ENCODE measurements at regions of chr4 and their contacts with region 1.

Region 1: GRCh38 chr4:69126024-69126423 is 29.8 kb downstream of the UGT2B7 start:
- DNase-seq: peak in 1 of 2 donors; percentile 15
- H3K4me3 ChIP-seq: no peak overlapping the region
- H3K27ac ChIP-seq: no peak overlapping the region
- H3K4me1 ChIP-seq: no peaks in the 10 kb centered on the region
- H3K27me3 ChIP-seq: no peaks in the 10 kb centered on the region
- CTCF ChIP-seq: no peak
- EP300 ChIP-seq: no peak
- POLR2A ChIP-seq: no peak

Region 2: GRCh38 chr4:68883870-68884269 is 242.2 kb before region 1 on chr4:
- intact Hi-C with region 1: loop called (anchors 5 kb)
- DNase-seq: no peak
- H3K4me3 ChIP-seq: no peak overlapping the region
- H3K27ac ChIP-seq: no peak overlapping the region
- H3K4me1 ChIP-seq: no peaks in the 10 kb centered on the region
- H3K27me3 ChIP-seq: no peaks in the 10 kb centered on the region
- CTCF ChIP-seq: no peak
- EP300 ChIP-seq: no peak
- POLR2A ChIP-seq: no peak

Region 3: GRCh38 chr4:68895561-68896198 is 230.3 kb before region 1 on chr4:
- intact Hi-C with region 1: no loop called
- DNase-seq: no peak
- H3K4me3 ChIP-seq: no peak overlapping the region
- H3K27ac ChIP-seq: no peak overlapping the region
- H3K4me1 ChIP-seq: no peaks in the 10 kb centered on the region
- H3K27me3 ChIP-seq: no peaks in the 10 kb centered on the region
- CTCF ChIP-seq: no peak
- EP300 ChIP-seq: no peak
- POLR2A ChIP-seq: no peak

Region 4: GRCh38 chr4:69075061-69075792 is 50.8 kb before region 1 on chr4:
- intact Hi-C with region 1: no loop called
- DNase-seq: no peak
- H3K4me3 ChIP-seq: no peak overlapping the region
- H3K27ac ChIP-seq: no peak overlapping the region
- H3K4me1 ChIP-seq: no peaks in the 10 kb centered on the region
- H3K27me3 ChIP-seq: no peaks in the 10 kb centered on the region
- CTCF ChIP-seq: no peak
- EP300 ChIP-seq: no peak
- POLR2A ChIP-seq: no peak

Measured in stomach (tissue), 19 donors.